AG04449 (cell line): ENCODE measurements at regions of chr6 and their contacts with region 1.

Region 1: DNA sequence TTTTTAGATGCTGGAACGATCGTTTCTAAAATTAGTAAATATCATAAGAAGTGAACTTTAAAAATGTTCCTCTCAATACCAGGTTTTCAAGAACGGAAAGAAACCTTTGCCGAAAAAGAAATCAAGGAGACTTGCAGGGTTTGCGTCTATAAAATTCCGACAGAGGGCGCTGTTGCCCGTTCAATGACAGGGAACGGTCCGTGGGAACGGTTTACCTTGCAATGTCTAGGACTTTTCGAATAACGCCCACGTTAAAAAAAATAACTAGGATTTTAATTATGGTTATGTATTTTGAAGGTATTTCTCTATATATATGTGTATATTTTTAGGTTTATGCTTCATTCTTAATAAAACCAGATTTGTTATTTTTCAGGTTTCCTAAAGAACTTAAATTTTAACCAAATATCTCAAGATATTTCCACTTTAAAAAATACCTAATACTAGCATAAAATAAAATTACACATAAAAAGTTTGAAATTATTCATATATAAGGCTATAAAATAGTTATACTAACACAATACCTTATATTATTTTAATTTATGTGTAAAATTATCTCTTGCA is 2.5 kb upstream of the TFAP2B start:
- DNase-seq: no peak
- H3K4me3 ChIP-seq: peak overlapping the region; percentile 61
- CTCF ChIP-seq: peak; percentile 76

Region 2: GRCh38 chr6:50707652-50708300 is 108.4 kb before region 1 on chr6:
- CTCF ChIA-PET with region 1: no interaction called
- POLR2A ChIA-PET with region 1: no interaction called
- DNase-seq: no peak
- H3K4me3 ChIP-seq: no peak overlapping the region
- CTCF ChIP-seq: no peak

Region 3: DNA sequence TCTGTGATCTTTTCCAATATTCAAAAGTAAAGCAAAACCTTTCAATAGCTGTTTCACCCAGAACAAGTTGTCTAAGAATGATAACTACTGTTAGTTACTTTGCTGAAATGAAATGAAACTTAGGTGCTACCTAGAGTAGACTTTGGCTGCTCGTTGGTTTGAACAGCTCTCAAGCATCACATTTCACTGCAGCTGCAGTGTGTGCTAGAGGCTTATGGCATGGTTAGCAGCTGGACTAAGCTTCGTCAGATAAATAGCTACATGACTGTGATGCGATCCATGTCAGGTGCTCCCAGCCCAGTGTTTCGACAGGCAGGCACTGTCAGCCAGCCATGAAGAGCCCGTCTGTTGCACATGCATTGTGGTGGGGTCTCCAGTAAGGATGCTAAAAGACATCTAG is 203.6 kb after region 1 on chr6:
- CTCF ChIA-PET with region 1: no interaction called
- POLR2A ChIA-PET with region 1: no interaction called
- DNase-seq: no peak
- H3K4me3 ChIP-seq: no peak overlapping the region
- CTCF ChIP-seq: no peak

Region 4: DNA sequence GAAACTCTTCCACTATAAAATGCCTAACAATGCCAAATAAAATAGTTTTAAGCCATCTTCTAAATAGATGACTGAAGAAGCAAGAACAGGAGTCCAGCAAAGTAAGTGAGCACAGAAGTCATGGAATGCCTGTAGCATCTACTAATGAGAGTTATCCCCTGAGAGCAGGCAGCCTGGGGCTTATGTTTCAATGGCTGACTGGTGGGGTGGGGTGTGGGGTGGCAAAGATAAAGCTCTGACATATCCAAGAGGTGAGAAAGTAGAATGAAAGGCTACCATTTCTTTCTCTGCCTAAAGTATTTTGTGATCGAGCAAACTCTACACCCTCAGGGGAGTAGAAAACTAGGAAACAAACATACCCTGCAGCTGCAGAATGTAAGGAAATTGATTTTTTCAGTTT is 351.3 kb after region 1 on chr6:
- CTCF ChIA-PET with region 1: no interaction called
- POLR2A ChIA-PET with region 1: no interaction called
- DNase-seq: no peak
- H3K4me3 ChIP-seq: no peak overlapping the region
- CTCF ChIP-seq: no peak

Region 5: GRCh38 chr6:51959744-51960383 is 1143.7 kb after region 1 on chr6:
- CTCF ChIA-PET with region 1: interaction called, 14 read pairs
- POLR2A ChIA-PET with region 1: no interaction called
- DNase-seq: no peak
- H3K4me3 ChIP-seq: no peak overlapping the region
- CTCF ChIP-seq: peak; percentile 81

Region 6: DNA sequence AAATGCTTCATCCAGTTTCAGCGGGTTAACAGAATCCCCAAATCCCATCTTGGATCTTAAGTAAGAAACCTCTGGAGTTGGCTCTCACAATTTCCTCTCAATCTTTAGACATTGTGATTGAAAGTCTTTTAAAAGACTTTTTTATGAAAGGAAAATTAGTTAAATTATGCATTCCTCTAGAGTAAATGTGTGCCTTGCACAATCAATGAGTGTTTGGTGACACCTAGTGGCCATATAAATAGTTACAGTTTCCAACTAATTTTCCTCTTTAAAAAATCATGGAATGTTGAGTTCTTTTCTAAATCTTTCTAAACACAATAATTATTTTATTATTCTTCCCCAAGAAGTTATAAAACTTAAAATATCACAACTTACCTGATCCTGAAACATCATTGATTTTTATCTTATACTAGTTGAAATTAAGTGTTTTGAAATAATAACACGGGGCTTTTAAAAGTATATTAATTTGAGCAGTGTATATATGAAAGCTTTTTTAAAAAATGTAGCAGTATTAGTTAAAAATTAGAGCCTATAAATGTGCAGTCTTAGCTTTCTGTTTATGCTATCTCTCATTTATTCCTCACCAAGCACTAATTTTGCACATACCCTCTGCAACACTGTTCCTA is 1204.9 kb after region 1 on chr6:
- CTCF ChIA-PET with region 1: interaction called, 10 read pairs
- POLR2A ChIA-PET with region 1: no interaction called
- DNase-seq: no peak
- H3K4me3 ChIP-seq: no peak overlapping the region
- CTCF ChIP-seq: peak; percentile 29